HCT116 (cell line): ENCODE measurements at regions of chr6 and their contacts with region 1.

Region 1: DNA sequence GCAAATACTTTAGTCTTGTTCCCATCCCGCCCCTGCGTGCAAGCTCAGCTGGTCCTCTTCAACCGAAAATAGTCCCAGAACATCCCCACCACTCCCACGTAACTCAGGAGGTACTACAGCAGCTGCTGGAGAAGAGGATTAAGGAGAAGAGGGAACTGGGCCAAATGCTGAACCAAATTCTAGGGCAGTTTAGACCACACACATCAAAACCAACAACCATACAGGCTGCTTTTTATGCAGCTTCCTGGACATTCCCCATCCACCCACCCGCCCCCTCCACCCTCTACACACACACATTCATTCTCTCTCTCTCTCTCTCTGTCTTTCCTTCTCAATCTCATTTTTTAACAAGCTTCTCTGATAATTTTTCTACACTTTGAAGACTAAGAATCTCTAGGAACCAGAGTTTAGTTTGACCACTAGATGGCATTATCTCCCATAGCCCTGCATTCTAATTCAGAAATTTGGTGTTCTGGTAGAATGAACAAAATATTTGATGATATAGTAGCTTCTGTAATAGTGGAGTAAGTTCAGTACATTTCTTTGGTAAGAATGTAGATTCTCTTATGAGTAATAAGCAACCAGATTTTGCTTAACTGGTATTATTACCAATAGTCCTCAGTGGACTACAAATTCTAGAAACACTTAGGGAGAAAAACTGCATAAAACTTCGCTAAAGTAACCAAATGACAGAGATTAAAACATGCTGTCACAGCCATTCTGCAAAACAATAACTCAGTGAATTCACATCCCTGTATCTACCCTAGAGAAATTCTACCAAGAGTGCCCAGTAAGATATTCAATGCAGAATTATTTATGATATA is 52.1 kb upstream of the BEND6 start:
- DNase-seq: no peak
- ATAC-seq: peak; percentile 26; the same call in 1 of the 2 replicates
- H3K4me3 ChIP-seq: no peak overlapping the region
- H3K27ac ChIP-seq: peak overlapping the region; percentile 48; the same call in 1 of the 2 replicates
- H3K4me1 ChIP-seq: peaks cover 24 to 47% of the 10 kb centered on the region in 2 experiments
- H3K27me3 ChIP-seq: no peaks in the 10 kb centered on the region
- CTCF ChIP-seq: peak; percentile 59 to 82 (median 66); a peak in 5 of 6 replicates
- POLR2A ChIP-seq: no peak
- RAD21 ChIP-seq: peak; percentile 72

Region 2: GRCh38 chr6:56914798-56915658 is 12.2 kb after region 1 on chr6:
- CTCF ChIA-PET with region 1: interaction called, 15 read pairs
- POLR2A ChIA-PET with region 1: interaction called, 3 read pairs
- RAD21 ChIA-PET with region 1: no interaction called
- intact Hi-C with region 1: no loop called
- DNase-seq: no peak
- ATAC-seq: no peak
- H3K4me3 ChIP-seq: no peak overlapping the region
- H3K27ac ChIP-seq: no peak overlapping the region
- H3K4me1 ChIP-seq: peaks cover 54 to 73% of the 10 kb centered on the region in 2 experiments
- H3K27me3 ChIP-seq: no peaks in the 10 kb centered on the region
- CTCF ChIP-seq: no peak
- POLR2A ChIP-seq: no peak
- RAD21 ChIP-seq: no peak

Region 3: DNA sequence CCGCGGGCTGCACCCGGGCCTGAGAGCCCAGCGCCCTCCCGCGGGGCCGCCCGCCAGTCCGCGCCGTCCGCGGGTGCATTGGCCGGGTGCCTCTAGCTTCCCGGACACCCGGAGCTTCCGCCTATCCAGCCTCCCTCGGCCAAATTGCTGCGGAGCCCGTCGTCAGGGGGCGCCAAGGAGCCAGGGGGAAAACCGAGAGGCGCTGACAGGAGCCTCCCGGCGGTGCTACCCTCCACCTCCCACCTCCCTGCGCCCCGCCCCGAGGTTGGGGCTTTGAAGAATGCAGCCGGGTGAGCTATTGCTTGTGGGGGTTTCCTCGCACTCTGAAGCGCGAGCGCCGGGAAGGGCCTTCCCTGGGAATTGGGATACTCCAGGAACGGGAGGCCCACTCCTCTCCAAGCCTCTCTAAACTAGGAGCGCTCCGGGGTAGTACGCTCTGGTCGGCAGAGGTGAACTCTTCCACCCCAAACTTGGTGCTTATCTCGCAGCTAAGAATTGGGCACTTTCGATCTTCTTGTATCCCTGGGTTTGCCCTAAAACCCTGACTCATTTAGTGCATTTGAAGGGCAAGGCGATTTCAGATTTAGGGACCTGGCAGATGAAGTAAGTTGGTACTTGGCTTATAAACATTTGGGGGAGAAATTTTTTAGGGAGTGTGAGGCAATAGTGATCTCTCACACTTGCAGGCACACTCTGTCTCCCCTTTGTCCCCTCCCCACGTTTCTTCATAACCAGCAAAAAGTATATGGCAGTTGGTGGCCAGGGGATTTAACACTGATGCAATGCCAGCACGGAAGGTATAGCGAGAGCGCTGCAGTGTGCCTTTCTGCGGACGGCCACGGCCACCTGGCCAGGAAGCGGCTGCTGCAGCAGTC is 52.6 kb after region 1 on chr6:
- CTCF ChIA-PET with region 1: interaction called, 43 read pairs
- POLR2A ChIA-PET with region 1: interaction called, 5 read pairs
- RAD21 ChIA-PET with region 1: interaction called, 8 to 13 read pairs
- intact Hi-C with region 1: loop called (anchors 1 kb)
- DNase-seq: peak; percentile 87
- ATAC-seq: peak; percentile 83
- H3K4me3 ChIP-seq: peak overlapping the region; percentile 88 to 92
- H3K27ac ChIP-seq: peak overlapping the region; percentile 99
- H3K4me1 ChIP-seq: peaks cover 15 to 58% of the 10 kb centered on the region in 2 experiments
- H3K27me3 ChIP-seq: no peaks in the 10 kb centered on the region
- CTCF ChIP-seq: peak; percentile 81 to 90 (median 86)
- POLR2A ChIP-seq: no peak
- RAD21 ChIP-seq: peak; percentile 76

Region 4: GRCh38 chr6:56970849-56971248 is 68.0 kb after region 1 on chr6:
- CTCF ChIA-PET with region 1: no interaction called
- POLR2A ChIA-PET with region 1: no interaction called
- RAD21 ChIA-PET with region 1: no interaction called
- intact Hi-C with region 1: no loop called
- DNase-seq: no peak
- ATAC-seq: no peak
- H3K4me3 ChIP-seq: no peak overlapping the region
- H3K27ac ChIP-seq: no peak overlapping the region
- H3K4me1 ChIP-seq: no peaks in the 10 kb centered on the region
- H3K27me3 ChIP-seq: no peaks in the 10 kb centered on the region
- CTCF ChIP-seq: no peak
- POLR2A ChIP-seq: no peak
- RAD21 ChIP-seq: no peak

Region 5: DNA sequence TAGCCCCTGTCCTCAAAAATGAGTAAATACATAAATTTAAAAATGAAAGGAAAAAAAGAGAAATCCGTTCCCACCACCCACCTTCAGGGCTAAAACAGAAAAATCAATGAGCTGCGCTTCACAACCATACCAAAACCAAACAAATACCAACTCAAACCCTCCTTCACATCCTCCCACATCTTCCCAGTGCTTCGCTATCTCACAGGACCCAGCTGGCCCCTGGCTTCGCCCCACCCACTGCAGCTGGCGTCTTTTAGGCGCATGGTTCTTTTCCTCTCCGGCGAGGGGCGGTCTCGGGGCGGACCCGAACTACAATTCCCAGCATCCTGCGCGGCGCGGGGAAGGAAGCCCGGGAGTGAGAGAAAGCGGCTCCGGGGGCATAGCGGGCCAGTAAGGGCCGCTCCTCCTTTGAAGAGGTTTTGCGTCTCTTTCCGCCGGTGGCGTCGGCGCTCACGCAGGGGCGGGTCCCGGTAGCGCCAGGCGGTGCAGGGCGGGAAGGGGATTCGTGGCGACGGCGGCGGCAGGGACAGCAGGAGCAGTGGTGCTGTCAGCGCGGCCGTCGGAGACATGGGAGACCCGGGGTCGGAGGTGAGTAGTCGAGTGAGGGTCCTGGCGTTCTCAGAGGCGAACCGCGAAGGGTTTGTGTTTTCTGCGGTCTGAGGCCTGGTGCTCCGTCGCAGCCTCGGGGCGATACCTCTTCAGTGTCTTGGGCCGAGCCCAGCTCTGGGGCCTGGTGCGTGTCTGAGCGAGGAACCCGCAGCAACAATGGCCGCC is 187.0 kb after region 1 on chr6 and contains the start of gene ZNF451:
- CTCF ChIA-PET with region 1: interaction called, 3 read pairs
- POLR2A ChIA-PET with region 1: no interaction called
- RAD21 ChIA-PET with region 1: no interaction called
- intact Hi-C with region 1: loop called (anchors 10 kb)
- DNase-seq: peak; percentile 90
- ATAC-seq: peak; percentile 94
- H3K4me3 ChIP-seq: peak within 1 kb of the TSS; percentile 55 to 61
- H3K27ac ChIP-seq: peak within 1 kb of the TSS; percentile 45; the same call in 1 of the 2 replicates
- H3K4me1 ChIP-seq: peaks cover 4 to 12% of the 10 kb centered on the region in 2 experiments; a peak in 3 of 4 replicates
- H3K27me3 ChIP-seq: no peaks in the 10 kb centered on the region
- CTCF ChIP-seq: no peak
- POLR2A ChIP-seq: peak; percentile 29
- RAD21 ChIP-seq: no peak
- total RNA-seq, gene ZNF451: 49.1 TPM

Region 6: DNA sequence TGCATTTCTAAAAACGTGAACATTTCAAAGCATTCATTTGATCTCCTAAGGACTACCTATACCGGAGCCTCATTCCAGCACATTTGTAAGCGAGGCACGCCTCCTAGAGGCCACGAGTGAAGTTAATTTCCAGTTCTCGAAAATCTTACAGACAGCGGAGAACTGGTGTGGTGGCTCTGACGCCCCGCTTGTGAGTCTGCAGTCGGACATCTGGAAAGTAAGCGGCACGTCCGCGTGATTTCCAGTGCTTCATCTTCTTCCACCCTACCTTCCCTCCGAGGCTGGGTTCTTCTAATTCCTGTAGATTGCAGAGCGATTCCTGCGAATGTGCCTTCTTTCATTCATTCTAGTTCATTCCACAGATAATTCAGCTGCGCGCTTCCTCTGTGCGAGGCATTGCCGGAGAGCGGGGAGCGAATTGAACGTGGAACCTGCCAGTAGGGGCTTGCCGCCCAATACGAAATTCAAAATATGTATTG is 413.8 kb after region 1 on chr6:
- CTCF ChIA-PET with region 1: interaction called, 27 read pairs
- POLR2A ChIA-PET with region 1: no interaction called
- RAD21 ChIA-PET with region 1: interaction called, 3 read pairs
- intact Hi-C with region 1: loop called (anchors 1 kb)
- DNase-seq: peak; percentile 91
- ATAC-seq: peak; percentile 78
- H3K4me3 ChIP-seq: peak overlapping the region; percentile 89 to 96
- H3K27ac ChIP-seq: peak overlapping the region; percentile 61
- H3K4me1 ChIP-seq: peaks cover 4 to 35% of the 10 kb centered on the region in 2 experiments
- H3K27me3 ChIP-seq: no peaks in the 10 kb centered on the region
- CTCF ChIP-seq: peak; percentile 68 to 84 (median 83)
- POLR2A ChIP-seq: peak; percentile 52
- RAD21 ChIP-seq: peak; percentile 98